GM12878 (cell line): ENCODE measurements at regions of chr5 and their contacts with region 1.

Region 1: GRCh38 chr5:107456281-107456715 is 214.4 kb downstream of the EFNA5 start:
- DNase-seq: peak; percentile 79
- ATAC-seq: peak; percentile 76
- H3K4me3 ChIP-seq: no peak overlapping the region
- H3K27ac ChIP-seq: peak overlapping the region; percentile 15; the same call in 1 of the 2 replicates
- H3K4me1 ChIP-seq: peaks cover 4% of the 10 kb centered on the region
- H3K27me3 ChIP-seq: no peaks in the 10 kb centered on the region
- CTCF ChIP-seq: no peak
- EP300 ChIP-seq: no peak
- POLR2A ChIP-seq: no peak
- RAD21 ChIP-seq: no peak

Region 2: GRCh38 chr5:107431998-107432397 is 24.3 kb before region 1 on chr5:
- CTCF ChIA-PET with region 1: interaction called, 3 read pairs
- POLR2A ChIA-PET with region 1: interaction called, 4 read pairs
- RAD21 ChIA-PET with region 1: interaction called, 5 read pairs
- SMC1A ChIA-PET with region 1: interaction called, 27 read pairs
- in situ Hi-C with region 1: no loop called
- intact Hi-C with region 1: no loop called
- DNase-seq: no peak
- ATAC-seq: no peak
- H3K4me3 ChIP-seq: no peak overlapping the region
- H3K27ac ChIP-seq: no peak overlapping the region
- H3K4me1 ChIP-seq: no peaks in the 10 kb centered on the region
- H3K27me3 ChIP-seq: no peaks in the 10 kb centered on the region
- CTCF ChIP-seq: no peak
- EP300 ChIP-seq: no peak
- POLR2A ChIP-seq: no peak
- RAD21 ChIP-seq: no peak

Region 3: DNA sequence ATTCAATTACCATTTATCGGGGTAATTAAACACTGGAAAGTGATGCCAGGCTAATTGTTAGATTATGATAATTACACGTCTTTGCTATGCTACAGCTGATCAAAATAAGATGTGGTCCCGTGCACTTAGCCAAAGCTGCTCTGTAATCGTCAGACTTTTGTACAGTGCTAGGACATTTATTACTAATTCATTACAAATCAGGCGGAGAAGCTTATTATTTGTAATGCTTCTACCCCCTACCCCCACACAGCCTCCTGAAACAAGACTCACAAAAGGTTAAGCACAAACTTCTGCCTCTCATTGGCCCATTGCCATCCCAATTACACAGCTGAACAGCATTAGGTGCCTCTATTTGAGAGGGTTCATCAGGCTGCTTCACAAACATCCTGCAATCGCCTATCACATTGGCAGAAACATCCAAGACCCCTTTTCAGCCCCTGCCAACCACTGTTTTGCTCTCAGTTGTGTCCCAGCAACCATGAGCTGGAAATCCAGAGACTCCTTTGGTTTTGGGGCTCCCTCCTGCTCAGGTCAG is 18.2 kb before region 1 on chr5:
- CTCF ChIA-PET with region 1: interaction called, 15 read pairs
- POLR2A ChIA-PET with region 1: interaction called, 7 read pairs
- RAD21 ChIA-PET with region 1: interaction called, 13 read pairs
- SMC1A ChIA-PET with region 1: interaction called, 68 read pairs
- in situ Hi-C with region 1: no loop called
- intact Hi-C with region 1: no loop called
- DNase-seq: no peak
- ATAC-seq: no peak
- H3K4me3 ChIP-seq: no peak overlapping the region
- H3K27ac ChIP-seq: no peak overlapping the region
- H3K4me1 ChIP-seq: no peaks in the 10 kb centered on the region
- H3K27me3 ChIP-seq: no peaks in the 10 kb centered on the region
- CTCF ChIP-seq: no peak
- EP300 ChIP-seq: no peak
- POLR2A ChIP-seq: no peak
- RAD21 ChIP-seq: no peak

Region 4: DNA sequence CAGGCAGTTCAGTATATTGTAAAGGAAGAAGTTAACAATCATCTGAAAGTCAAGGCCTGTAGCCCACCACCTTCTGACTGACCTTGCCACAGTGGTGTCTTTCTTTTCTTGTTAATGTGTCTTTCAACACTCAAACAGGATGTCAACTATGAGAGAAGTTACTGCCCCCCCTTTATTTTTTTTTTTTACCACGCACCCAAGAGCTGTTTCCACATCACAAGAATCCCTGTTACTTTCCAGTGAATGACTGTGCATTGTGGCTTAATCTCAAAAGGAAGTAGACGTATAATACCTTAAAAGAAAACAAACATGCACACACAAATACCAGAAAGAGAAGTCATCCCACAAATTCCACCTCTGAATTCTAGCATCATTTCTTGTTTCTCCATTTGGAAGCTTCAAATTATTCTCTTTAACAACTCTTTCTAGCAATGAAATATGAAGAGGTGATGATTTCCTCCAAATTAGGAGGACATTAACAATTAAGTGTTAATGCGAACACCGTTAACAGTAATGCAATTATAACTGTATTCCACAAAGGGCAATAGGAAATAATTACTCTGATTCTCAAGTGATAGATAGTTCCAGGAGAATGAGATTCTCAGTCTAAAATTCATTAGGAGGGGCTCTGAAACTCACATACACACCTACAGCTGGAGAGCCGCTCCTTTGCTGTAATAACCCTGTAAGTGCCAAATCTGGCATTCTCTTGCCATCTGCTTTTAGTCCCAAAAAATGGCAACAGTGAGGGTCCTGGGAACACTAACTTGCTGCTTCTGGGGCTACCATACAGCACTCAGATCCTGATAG is 13.4 kb after region 1 on chr5:
- CTCF ChIA-PET with region 1: interaction called, 12 read pairs
- POLR2A ChIA-PET with region 1: interaction called, 19 read pairs
- RAD21 ChIA-PET with region 1: interaction called, 13 read pairs
- SMC1A ChIA-PET with region 1: interaction called, 33 read pairs
- in situ Hi-C with region 1: no loop called
- intact Hi-C with region 1: no loop called
- DNase-seq: no peak
- ATAC-seq: no peak; the same call in 1 of the 3 replicates
- H3K4me3 ChIP-seq: no peak overlapping the region
- H3K27ac ChIP-seq: no peak overlapping the region
- H3K4me1 ChIP-seq: peaks cover under 1% of the 10 kb centered on the region; the same call in 1 of the 2 replicates
- H3K27me3 ChIP-seq: no peaks in the 10 kb centered on the region; a peak in 1 of 4 replicates
- CTCF ChIP-seq: no peak
- EP300 ChIP-seq: no peak
- POLR2A ChIP-seq: no peak
- RAD21 ChIP-seq: no peak